Activated T-helper 1 cell treated with anti-CD3 and anti-CD28 coated beads, Interleukin-12 subunit alpha, Interleukin-12 subunit beta, Interleukin-2, Interleukin-4 antibody, amounts not matched to agents 30 ng/mL and 10 ng/mL and 1 ng/mL, durations not matched to agents 14 hours and 24 hours and 36 hours (primary cell): ENCODE measurements at regions of chr2 and their contacts with region 1.

Region 1: DNA sequence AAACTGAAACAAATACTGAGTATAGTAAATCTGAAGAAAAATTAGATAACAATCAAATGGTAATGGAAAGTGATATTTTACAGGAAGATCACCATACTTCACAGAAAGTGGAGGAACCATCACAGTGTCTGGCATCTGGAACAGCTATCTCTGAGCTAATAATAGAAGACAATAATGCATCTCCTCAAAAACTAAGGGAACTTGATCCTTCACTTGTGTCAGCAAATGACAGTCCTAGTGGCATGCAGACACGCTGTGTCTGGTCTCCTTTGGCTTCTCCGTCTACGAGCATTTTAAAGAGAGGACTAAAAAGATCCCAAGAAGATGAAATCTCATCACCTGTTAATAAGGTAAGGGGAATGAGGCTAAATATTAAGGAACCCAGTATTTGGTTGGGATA is 56.1 kb downstream of the RIF1 start:
- DNase-seq: no peak
- H3K4me3 Mint-ChIP-seq: no peak overlapping the region
- H3K27ac Mint-ChIP-seq: no peak overlapping the region
- H3K4me1 Mint-ChIP-seq: peaks cover 6% of the 10 kb centered on the region
- H3K27me3 Mint-ChIP-seq: no peaks in the 10 kb centered on the region

Region 2: DNA sequence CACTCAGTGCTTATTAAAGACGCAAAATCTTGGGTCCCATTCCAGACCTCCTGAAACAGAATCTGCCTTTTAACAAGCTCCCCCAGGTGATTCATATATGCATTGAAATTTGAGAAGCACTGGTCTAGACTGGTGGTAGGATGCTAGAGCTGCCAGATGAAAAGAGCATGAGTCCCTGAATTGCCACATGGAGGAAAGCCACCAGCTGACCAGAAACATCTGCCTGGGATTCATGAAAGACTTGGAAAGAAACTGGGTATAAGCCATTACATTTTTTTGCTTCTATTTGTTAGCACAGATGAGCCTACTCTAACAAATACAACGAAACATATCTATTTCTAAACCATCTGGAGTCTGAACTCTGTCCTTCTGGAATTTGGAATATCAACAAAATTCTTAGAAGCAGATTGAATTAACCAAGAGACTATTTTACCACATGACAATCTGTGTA is 433.0 kb before region 1 on chr2:
- intact Hi-C with region 1: no loop called
- DNase-seq: no peak
- H3K4me3 Mint-ChIP-seq: no peak overlapping the region
- H3K27ac Mint-ChIP-seq: no peak overlapping the region
- H3K4me1 Mint-ChIP-seq: peaks cover 7% of the 10 kb centered on the region
- H3K27me3 Mint-ChIP-seq: peaks cover 7% of the 10 kb centered on the region

Region 3: DNA sequence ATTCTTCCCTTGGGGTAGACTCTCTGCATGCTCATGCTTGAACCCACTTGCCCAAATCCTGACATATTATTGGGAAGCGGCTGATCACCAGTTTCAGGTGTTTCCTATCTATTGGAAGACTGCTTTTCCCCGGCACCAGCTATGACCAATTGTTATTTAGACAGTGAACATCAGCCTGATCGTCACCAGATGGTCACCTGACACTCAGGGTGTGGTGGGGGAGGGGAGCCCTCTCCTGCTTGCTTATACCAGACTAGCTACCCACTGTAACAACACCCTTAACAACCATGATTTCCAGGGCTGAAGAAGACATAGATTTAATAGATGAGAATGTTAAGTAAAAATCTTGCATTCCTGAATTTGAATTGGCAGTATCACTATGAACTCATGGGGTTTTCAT is 248.4 kb before region 1 on chr2:
- intact Hi-C with region 1: no loop called
- DNase-seq: no peak
- H3K4me3 Mint-ChIP-seq: no peak overlapping the region
- H3K27ac Mint-ChIP-seq: no peak overlapping the region
- H3K4me1 Mint-ChIP-seq: no peaks in the 10 kb centered on the region
- H3K27me3 Mint-ChIP-seq: peaks cover 10% of the 10 kb centered on the region

Region 4: GRCh38 chr2:151422917-151423439 is 42.8 kb before region 1 on chr2:
- intact Hi-C with region 1: loop called (anchors 5 kb)
- DNase-seq: no peak
- H3K4me3 Mint-ChIP-seq: no peak overlapping the region
- H3K27ac Mint-ChIP-seq: peak overlapping the region; percentile 74
- H3K4me1 Mint-ChIP-seq: peaks cover 29% of the 10 kb centered on the region
- H3K27me3 Mint-ChIP-seq: no peaks in the 10 kb centered on the region

Region 5: DNA sequence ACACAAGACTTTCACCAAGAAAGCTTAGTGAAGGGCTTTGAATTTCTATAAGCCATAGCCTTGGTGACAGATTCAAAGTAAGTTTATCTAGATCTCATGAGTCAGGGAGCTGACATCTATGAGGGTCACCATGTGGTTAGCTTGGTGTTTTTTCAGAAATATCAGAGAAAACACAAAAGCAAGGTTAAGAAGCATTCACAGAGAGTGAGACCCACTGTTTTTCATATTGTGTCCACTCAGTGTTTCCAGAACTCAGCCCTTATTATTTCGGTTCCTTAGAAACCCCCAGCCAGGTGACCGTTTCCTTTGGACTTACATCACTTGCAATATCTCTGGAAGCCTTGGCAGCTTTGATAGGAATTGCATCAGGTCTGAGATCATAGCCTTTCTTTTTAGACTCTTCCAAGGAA is 191.9 kb after region 1 on chr2:
- intact Hi-C with region 1: no loop called
- DNase-seq: no peak
- H3K4me3 Mint-ChIP-seq: no peak overlapping the region
- H3K27ac Mint-ChIP-seq: no peak overlapping the region
- H3K4me1 Mint-ChIP-seq: no peaks in the 10 kb centered on the region
- H3K27me3 Mint-ChIP-seq: peaks cover 4% of the 10 kb centered on the region